ENCODE measurements at regions of chr16 and their contacts with region 1.

Region 1: DNA sequence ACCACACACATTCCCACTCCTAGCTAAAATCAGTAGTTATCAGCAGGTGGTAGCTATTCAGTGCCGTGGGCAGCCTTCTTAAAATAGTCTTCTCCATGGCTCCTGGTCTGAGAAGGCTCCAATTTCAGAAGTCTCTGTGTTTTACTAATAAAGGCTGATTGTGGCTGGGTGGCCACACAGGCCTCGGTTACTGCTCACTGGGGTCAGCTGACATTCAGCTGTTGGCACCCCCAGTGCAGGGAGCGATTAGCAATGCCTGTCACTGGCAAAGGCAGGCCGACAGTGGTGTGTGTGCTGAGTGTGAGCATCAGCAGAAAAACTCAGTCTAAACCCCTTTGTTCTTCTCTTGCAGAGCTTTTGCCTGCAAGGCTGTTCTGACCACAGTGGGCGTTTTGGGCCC is 16.6 kb upstream of the DBNDD1 start:
- DNase-seq: no peak
- ATAC-seq: no peak
- H3K4me3 ChIP-seq: no peak overlapping the region
- H3K27ac ChIP-seq: no peak overlapping the region
- H3K4me1 ChIP-seq: peaks cover 0 to 9% of the 10 kb centered on the region in 2 experiments; a peak in 1 of 5 replicates
- H3K27me3 ChIP-seq: no peaks in the 10 kb centered on the region; a peak in 1 of 5 replicates
- CTCF ChIP-seq: no peak
- EP300 ChIP-seq: no peak
- POLR2A ChIP-seq: no peak
- RAD21 ChIP-seq: no peak

Region 2: DNA sequence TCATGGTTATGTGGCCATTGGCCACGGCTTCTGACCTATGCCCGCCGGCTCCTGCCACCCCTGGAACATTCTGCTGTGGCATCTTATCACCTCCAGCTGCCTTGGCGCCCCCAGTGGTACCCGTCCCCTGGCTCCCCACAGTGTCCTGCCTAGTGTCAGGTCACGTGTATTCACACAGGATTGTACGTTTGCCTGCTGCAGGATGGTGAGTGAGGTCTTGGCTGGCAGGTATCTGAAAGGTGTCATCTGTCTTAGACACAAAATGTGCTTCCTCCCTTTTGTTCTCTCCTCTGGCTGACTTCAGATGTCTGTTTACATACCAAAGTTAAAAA is 41.5 kb before region 1 on chr16:
- CTCF ChIA-PET with region 1: no interaction called
- POLR2A ChIA-PET with region 1: no interaction called
- in situ Hi-C with region 1: no loop called
- intact Hi-C with region 1: no loop called
- DNase-seq: no peak
- ATAC-seq: no peak
- H3K4me3 ChIP-seq: no peak overlapping the region
- H3K27ac ChIP-seq: peak overlapping the region; percentile 100
- H3K4me1 ChIP-seq: peaks cover 2 to 18% of the 10 kb centered on the region in 2 experiments; a peak in 4 of 5 replicates
- H3K27me3 ChIP-seq: no peaks in the 10 kb centered on the region
- CTCF ChIP-seq: no peak
- EP300 ChIP-seq: no peak
- POLR2A ChIP-seq: no peak
- RAD21 ChIP-seq: no peak

Region 3: GRCh38 chr16:90046971-90047713 is 11.2 kb after region 1 on chr16:
- CTCF ChIA-PET with region 1: no interaction called
- POLR2A ChIA-PET with region 1: interaction called, 14 read pairs
- in situ Hi-C with region 1: no loop called
- intact Hi-C with region 1: no loop called
- DNase-seq: peak in 2 of 4 experiments; percentile 31 to 87
- ATAC-seq: peak; percentile 93
- H3K4me3 ChIP-seq: peak overlapping the region; percentile 49
- H3K27ac ChIP-seq: peak overlapping the region; percentile 54
- H3K4me1 ChIP-seq: peaks cover 18 to 39% of the 10 kb centered on the region in 2 experiments; a peak in 3 of 5 replicates
- H3K27me3 ChIP-seq: no peaks in the 10 kb centered on the region
- CTCF ChIP-seq: no peak
- EP300 ChIP-seq: no peak
- POLR2A ChIP-seq: peak; percentile 70; the same call in 1 of the 2 replicates
- RAD21 ChIP-seq: no peak

Region 4: DNA sequence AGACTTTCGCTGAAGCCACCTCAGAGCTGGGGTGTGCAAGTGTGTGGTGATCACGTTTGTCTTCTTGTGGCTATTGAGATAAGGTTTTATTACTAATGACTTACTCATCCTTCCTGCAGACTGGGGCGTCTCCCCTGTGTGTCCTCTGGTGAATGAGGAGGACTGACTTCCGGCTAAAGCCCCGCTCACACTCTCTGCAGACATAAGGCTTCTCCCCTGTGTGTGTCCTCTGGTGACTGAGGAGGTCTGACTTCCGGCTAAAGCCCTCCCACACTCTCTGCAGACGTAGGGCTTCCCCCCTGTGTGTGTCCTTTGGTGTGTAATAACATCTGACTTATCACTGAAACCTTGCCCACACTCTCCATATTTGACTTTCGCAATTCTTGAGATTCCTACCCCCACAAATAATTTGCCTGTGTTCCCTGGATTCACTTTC is 21.9 kb after region 1 on chr16:
- CTCF ChIA-PET with region 1: no interaction called
- POLR2A ChIA-PET with region 1: no interaction called
- in situ Hi-C with region 1: no loop called
- intact Hi-C with region 1: no loop called
- DNase-seq: peak; percentile 46 to 71 (median 54)
- ATAC-seq: peak; percentile 88
- H3K4me3 ChIP-seq: no peak overlapping the region
- H3K27ac ChIP-seq: peak overlapping the region; percentile 70
- H3K4me1 ChIP-seq: peaks cover 6 to 15% of the 10 kb centered on the region in 2 experiments; a peak in 4 of 5 replicates
- H3K27me3 ChIP-seq: no peaks in the 10 kb centered on the region
- CTCF ChIP-seq: no peak
- EP300 ChIP-seq: peak; percentile 44; the same call in 1 of the 2 replicates
- POLR2A ChIP-seq: no peak
- RAD21 ChIP-seq: no peak

Measured in K562 (cell line).